ENCODE measurements at regions of chr7 and their contacts with region 1.

Region 1: DNA sequence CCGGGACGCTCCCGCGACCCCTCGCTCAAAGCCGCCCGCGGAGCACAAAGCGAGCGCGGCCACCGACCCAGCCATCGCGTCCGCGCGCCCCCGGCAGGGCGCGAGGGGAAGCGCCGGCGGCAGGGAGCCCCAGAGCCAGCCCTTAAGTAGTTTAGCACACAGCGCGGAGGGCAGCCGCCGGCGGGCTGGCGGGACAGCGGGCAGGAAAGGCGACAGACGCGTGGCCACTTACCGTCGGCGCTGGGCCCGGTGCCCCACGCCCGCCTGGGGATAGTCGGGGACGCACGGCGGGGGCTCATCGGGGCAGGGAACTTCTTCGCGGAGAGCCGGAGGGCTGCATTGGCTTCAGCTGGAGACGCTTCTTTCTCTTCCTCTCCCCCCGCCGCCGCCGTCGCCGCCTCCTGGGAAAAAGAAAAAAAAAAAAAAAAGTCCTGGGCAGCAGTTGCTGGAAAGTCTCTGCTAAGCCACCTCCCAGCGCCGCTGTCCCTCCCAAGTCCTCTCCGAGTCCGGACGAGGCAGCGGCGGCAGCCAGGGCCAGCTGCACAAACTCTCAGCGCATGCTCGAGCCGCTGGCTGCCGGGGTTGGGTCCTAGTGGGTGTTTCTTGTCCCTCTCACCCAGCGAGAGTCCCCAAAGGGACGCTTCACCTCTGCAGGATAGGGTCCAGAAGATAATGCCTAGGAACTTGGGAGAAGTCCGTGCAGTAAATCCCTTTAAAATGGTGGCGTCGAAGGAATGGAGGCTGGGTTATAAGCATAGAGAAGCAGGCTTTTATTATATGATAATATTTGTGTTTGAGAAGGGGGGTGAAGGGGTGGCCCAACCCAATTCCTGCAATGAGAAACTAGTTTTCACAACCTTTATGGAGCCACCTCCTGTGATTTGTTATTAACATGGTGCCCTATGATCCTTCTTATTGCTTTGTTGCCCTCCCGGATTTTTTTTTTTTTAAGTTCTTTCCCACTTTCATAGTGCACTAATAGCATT is at the start of gene TSPAN12:
- DNase-seq: peak; percentile 91 to 96 (median 96)
- ATAC-seq: peak; percentile 97
- H3K4me3 ChIP-seq: peak within 1 kb of the TSS; percentile 86
- H3K27ac ChIP-seq: peak within 1 kb of the TSS; percentile 87
- H3K4me1 ChIP-seq: no peaks in the 10 kb centered on the region
- H3K27me3 ChIP-seq: no peaks in the 10 kb centered on the region
- total RNA-seq, gene TSPAN12: 43.4 to 63.7 (median 59.9) TPM

Region 2: DNA sequence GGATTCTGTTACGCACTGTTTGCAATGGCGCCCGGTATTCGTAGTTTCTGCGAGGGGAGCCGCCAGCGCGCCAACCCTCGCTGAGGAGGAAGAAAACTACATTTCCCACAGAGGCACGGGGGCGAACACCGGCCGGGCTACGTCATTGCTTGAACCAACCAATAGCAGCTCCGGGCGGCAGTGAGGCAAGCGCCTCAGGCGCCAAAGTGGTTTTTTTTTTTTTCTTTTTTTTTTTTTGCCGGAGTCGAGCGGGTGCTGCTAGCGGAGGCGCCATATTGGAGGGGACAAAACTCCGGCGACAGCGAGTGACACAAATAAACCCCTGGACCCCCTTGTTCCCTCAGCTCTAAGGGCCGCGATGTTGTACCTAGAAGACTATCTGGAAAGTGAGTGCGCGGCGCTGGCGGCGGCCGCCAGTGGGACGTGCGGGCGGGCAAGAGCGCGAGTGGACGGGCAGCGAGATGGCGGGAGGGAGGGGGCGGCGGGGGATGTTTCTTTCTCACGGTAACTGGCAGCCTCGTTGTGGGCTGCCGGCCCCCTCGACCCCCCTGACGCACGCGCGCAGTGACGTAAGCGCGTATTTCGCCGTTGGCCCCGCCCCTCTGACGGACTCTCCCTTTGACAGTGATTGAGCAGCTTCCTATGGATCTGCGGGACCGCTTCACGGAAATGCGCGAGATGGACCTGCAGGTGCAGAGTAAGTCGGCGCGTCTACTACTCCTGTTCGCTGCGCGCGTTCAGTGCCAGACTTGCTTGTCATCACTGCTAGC is 92.8 kb after region 1 on chr7 and contains the start of gene ING3:
- intact Hi-C with region 1: loop called in 1 of 4 experiments (anchors 5 kb)
- DNase-seq: peak; percentile 96 to 98 (median 98)
- ATAC-seq: peak; percentile 99
- H3K4me3 ChIP-seq: peak within 1 kb of the TSS; percentile 99
- H3K27ac ChIP-seq: peak within 1 kb of the TSS; percentile 100
- H3K4me1 ChIP-seq: peaks cover 2% of the 10 kb centered on the region
- H3K27me3 ChIP-seq: no peaks in the 10 kb centered on the region
- total RNA-seq, gene ING3: 14.7 to 16.7 (median 15.7) TPM

Measured in right cardiac atrium (tissue), 5 donors.